IMR-90 (cell line): ENCODE measurements at regions of chr7 and their contacts with region 1.

Region 1: DNA sequence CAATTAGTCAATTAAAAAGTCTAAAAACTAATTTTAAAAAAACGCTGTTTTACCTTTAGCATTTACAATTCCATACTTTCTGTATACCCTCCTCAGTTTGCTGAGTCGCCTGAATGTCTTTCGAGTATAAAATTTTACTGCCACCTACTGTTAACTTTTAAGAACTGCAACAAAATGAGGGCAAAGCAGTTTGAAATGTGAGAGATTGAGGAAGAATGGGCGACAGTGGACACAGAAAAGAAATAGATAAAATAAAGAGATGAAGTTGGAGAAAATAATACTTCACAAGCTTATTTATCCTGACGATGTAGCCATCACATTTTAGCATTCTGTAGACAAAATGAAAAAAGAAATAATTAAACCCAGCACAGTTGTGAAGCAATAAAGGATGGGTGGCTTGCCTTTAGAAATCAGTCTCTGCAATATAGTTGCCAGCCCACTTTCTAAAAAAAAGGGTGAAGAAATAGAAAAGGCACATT is 110.8 kb upstream of the PTN start:
- DNase-seq: peak; percentile 70
- ATAC-seq: peak; percentile 82
- H3K4me3 ChIP-seq: no peak overlapping the region
- H3K27ac ChIP-seq: peak overlapping the region; percentile 86
- H3K4me1 ChIP-seq: peaks cover 7% of the 10 kb centered on the region
- H3K27me3 ChIP-seq: no peaks in the 10 kb centered on the region
- CTCF ChIP-seq: peak; percentile 72
- POLR2A ChIP-seq: no peak
- RAD21 ChIP-seq: peak; percentile 72

Region 2: GRCh38 chr7:136405931-136406777 is 1048.1 kb before region 1 on chr7:
- CTCF ChIA-PET with region 1: interaction called, 3 read pairs
- POLR2A ChIA-PET with region 1: no interaction called
- dilution Hi-C with region 1: no loop called
- in situ Hi-C with region 1: no loop called
- intact Hi-C with region 1: loop called (anchors 1 kb)
- DNase-seq: peak; percentile 53
- ATAC-seq: peak; percentile 94
- H3K4me3 ChIP-seq: no peak overlapping the region
- H3K27ac ChIP-seq: no peak overlapping the region
- H3K4me1 ChIP-seq: no peaks in the 10 kb centered on the region
- H3K27me3 ChIP-seq: no peaks in the 10 kb centered on the region; the same call in 1 of the 2 replicates
- CTCF ChIP-seq: peak; percentile 68
- POLR2A ChIP-seq: no peak
- RAD21 ChIP-seq: peak; percentile 62

Region 3: GRCh38 chr7:136956232-136956631 is 498.1 kb before region 1 on chr7:
- CTCF ChIA-PET with region 1: no interaction called
- POLR2A ChIA-PET with region 1: no interaction called
- dilution Hi-C with region 1: no loop called
- in situ Hi-C with region 1: no loop called
- intact Hi-C with region 1: loop called (anchors 5 kb)
- DNase-seq: peak; percentile 87
- ATAC-seq: peak; percentile 70
- H3K4me3 ChIP-seq: no peak overlapping the region
- H3K27ac ChIP-seq: peak overlapping the region; percentile 100
- H3K4me1 ChIP-seq: peaks cover 20% of the 10 kb centered on the region
- H3K27me3 ChIP-seq: no peaks in the 10 kb centered on the region
- CTCF ChIP-seq: no peak
- POLR2A ChIP-seq: no peak
- RAD21 ChIP-seq: no peak

Region 4: DNA sequence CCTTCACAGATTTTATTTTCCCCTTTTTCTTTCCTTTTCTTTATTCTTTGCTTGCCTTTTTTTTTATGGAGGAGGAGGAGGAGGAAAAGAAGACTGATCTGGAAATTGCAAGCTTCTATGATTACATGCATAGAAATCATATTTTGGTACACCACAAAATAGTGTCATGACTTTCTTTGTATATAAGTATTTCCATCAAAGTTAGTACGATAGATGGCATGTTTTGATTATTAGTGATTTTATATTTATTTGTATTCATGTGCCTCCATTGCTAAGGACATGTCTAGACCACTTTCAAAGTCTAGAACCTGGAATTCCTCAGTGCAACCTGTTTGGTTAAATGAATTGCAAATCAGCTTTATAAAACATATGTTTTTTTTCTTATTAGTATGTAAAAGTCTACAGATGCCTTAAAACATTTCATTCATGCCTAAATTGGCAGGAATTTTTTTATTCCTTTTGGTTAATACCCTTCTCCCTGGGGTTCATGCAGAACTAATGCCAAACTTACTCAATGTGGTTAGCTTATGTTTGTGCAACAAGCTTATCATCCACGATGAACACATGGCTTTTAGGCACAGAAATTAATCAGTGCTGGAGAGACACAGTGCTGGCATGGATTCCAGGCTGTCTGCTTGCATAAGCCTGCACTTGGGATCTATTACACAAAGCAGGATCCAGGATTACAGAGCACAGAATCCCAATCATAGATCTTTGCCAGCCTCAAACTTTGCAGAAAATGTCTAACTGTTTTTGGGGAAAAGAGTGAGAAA is 372.8 kb before region 1 on chr7:
- CTCF ChIA-PET with region 1: no interaction called
- POLR2A ChIA-PET with region 1: no interaction called
- dilution Hi-C with region 1: no loop called
- in situ Hi-C with region 1: no loop called
- intact Hi-C with region 1: loop called (anchors 2 kb)
- DNase-seq: peak; percentile 98
- ATAC-seq: peak; percentile 69
- H3K4me3 ChIP-seq: no peak overlapping the region
- H3K27ac ChIP-seq: peak overlapping the region; percentile 99
- H3K4me1 ChIP-seq: peaks cover 13% of the 10 kb centered on the region
- H3K27me3 ChIP-seq: no peaks in the 10 kb centered on the region
- CTCF ChIP-seq: no peak
- POLR2A ChIP-seq: no peak
- RAD21 ChIP-seq: no peak

Region 5: DNA sequence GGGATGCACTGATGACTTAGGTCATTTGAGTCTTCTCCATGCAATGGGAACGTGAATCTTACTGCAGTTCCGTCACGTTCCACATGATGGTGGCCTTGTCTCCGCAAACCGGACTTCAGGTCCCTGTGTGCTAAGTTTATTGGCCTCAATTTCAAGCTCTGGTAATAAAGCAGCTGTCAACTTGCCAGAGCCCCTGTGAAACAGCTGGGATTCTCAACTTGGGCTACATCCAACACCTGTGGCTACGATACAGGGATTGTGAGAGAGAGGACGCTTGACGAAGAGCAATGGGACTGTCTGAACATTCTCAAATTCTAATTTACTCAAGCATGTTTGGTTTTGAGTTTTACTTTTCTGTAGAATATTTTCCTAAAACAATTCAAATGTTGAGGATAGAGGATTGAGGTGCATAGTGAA is 285.0 kb before region 1 on chr7:
- CTCF ChIA-PET with region 1: interaction called, 13 read pairs
- POLR2A ChIA-PET with region 1: interaction called, 3 read pairs
- dilution Hi-C with region 1: no loop called
- in situ Hi-C with region 1: loop called (anchors 5 kb)
- intact Hi-C with region 1: loop called (anchors 1 kb)
- DNase-seq: peak; percentile 85
- ATAC-seq: peak; percentile 98
- H3K4me3 ChIP-seq: no peak overlapping the region
- H3K27ac ChIP-seq: no peak overlapping the region; the same call in 1 of the 2 replicates
- H3K4me1 ChIP-seq: peaks cover 5% of the 10 kb centered on the region
- H3K27me3 ChIP-seq: no peaks in the 10 kb centered on the region
- CTCF ChIP-seq: peak; percentile 77
- POLR2A ChIP-seq: no peak
- RAD21 ChIP-seq: peak; percentile 92